ENCODE measurements at regions of chr16 and their contacts with region 1.

Region 1: GRCh38 chr16:19822533-19822932 is 62.1 kb downstream of the GPRC5B start:
- DNase-seq: no peak
- H3K4me3 ChIP-seq: no peak overlapping the region
- H3K27ac ChIP-seq: no peak overlapping the region
- H3K4me1 ChIP-seq: no peaks in the 10 kb centered on the region
- H3K27me3 ChIP-seq: no peaks in the 10 kb centered on the region
- CTCF ChIP-seq: no peak
- EP300 ChIP-seq: no peak
- POLR2A ChIP-seq: no peak

Region 2: DNA sequence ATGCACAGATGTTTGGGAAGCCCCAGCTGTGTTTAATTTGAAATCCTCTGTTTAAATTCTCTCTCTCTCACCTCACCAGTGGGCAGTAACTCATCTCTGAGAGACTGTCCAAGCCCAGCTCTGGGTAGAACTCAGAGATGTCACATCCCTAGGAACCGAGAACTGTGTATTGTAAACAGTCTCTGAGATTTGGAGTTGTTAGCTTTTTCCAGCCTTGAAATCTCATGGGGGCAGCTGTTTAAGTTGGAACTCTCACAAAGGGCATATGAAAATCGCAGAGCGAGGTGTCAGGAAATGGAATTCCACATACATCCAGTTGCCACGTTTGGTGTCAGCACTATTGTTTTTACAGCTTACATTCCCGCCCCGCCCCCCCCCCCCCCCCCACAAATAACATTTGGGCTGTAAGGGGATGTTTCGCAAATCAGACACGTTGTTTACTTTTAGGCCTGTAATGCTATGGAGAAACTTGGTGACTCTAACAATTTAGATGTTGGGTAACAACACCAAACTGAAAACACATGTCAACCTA is 232.7 kb before region 1 on chr16:
- intact Hi-C with region 1: loop called in 1 of 4 experiments (anchors 5 kb)
- DNase-seq: peak in 1 of 5 donors; percentile 24
- H3K4me3 ChIP-seq: no peak overlapping the region
- H3K27ac ChIP-seq: no peak overlapping the region
- H3K4me1 ChIP-seq: peaks cover 3% of the 10 kb centered on the region
- H3K27me3 ChIP-seq: no peaks in the 10 kb centered on the region
- CTCF ChIP-seq: no peak
- EP300 ChIP-seq: no peak
- POLR2A ChIP-seq: no peak

Region 3: DNA sequence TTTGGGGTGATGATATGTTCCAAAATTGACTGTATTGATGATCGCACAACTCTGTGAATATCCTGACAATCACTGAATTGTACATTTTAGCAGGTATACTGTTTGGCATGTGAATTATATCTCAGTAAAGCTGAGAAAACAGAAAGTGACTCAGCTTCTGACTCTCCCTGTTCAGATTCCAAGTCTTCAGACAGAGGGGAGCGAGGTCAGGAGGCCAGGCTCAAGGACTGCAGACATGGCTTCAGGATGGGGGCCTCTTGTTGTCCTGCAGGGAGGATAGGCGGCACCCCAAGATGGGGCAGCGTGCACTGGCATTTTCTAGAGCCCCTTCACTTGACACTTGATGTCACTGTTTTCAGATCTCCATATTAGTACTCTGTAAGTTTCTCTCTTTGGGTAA is 150.2 kb before region 1 on chr16:
- intact Hi-C with region 1: no loop called
- DNase-seq: no peak
- H3K4me3 ChIP-seq: no peak overlapping the region
- H3K27ac ChIP-seq: no peak overlapping the region
- H3K4me1 ChIP-seq: no peaks in the 10 kb centered on the region
- H3K27me3 ChIP-seq: no peaks in the 10 kb centered on the region
- CTCF ChIP-seq: no peak
- EP300 ChIP-seq: no peak
- POLR2A ChIP-seq: no peak

Measured in ovary (tissue), 10 donors.